ENCODE measurements at regions of chr1 and their contacts with region 1.

Region 1: DNA sequence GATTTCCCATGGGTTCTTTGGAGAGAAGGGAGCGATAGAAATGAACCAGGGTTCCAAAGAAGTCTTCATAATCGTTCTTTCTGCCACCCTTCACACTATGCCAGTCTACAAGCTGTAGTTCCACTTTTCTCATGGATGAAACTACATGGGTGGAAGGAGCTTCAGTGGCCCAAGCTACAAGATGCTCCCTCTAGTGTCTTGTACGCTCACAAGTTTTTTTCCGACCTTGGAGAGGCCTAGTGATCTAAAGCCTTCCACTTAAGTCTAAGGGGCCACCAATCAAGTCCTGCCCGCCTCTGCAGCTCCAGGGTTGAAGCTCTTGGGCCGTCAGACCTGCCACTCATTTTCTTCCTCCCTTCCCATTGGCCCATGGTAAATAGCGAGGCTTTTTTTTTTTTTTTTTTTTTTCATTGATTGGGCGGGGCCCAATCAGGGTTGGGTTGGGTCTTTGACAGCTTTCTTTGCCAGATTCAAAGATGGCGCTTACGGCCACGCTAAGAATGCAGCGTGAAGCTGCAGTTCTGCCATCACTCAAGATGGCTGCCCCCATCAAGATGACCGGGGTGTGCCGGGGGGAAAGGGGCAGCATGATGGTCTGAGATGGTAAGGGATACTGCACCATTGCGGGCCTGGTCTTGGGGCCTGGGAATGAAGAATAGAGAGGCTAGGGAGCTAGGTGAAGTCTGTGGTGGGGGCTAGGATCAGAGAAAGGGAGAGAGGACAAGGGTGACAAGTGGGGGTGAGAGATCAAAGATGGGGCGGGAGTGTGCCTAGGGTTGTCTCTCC is at the start of gene TOMM40L:
- H3K4me3 ChIP-seq: peak within 1 kb of the TSS; percentile 84
- H3K27ac ChIP-seq: peak within 1 kb of the TSS; percentile 26; the same call in 1 of the 2 replicates
- H3K4me1 ChIP-seq: peaks cover 4% of the 10 kb centered on the region; the same call in 1 of the 2 replicates
- CTCF ChIP-seq: peak; percentile 74

Region 2: GRCh38 chr1:161082991-161083742 is 142.6 kb before region 1 on chr1:
- CTCF ChIA-PET with region 1: no interaction called
- POLR2A ChIA-PET with region 1: no interaction called
- H3K4me3 ChIP-seq: no peak overlapping the region
- H3K27ac ChIP-seq: peak overlapping the region; percentile 18; the same call in 1 of the 2 replicates
- H3K4me1 ChIP-seq: no peaks in the 10 kb centered on the region; the same call in 1 of the 2 replicates
- CTCF ChIP-seq: no peak

Region 3: DNA sequence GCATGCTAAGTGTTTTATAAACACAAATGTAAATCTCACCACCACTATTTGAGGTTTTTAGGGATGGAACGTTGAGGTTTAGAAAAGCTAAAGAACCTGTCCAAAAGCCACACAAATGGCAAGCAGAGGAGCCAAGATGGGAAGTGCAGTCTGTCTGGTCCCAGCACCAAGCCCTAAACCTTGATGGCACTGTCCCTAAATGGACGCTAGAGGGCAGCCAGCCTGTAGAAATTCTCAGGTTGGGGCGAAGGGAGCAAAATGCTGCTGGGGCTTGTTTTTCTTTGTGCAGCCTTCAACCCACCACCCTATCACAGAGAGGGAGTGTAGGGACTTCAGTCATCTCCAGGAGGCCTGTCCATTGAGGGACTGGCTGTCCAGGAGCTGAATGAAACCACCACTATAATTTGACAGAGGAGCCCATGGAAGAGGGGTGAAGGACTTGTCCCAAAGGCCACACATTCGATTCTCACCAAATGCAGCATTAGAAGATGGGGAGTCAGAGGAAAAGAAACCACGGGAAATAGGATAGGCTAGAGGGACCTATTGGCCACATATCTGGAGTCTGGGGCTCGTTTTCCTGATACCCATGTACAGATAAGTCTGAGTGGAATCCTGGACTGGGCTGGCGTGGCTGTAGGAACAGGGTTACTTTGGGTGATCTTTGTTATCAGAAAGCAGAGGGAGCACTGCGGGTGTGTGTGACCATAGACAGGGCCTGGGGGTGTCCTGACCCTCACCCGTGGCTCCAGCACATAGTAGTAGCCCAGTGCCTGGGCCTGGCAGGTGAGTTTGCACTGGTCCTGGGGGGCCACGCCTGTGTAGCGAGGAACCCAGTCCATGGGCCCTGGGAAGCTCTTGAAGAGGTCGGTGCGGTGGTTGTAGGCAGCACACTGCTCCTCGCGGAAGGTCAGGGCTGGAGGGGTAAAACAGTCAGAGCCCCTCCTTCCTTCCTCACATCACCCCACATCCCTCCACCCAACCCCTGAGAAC is 33.0 kb before region 1 on chr1:
- CTCF ChIA-PET with region 1: interaction called, 45 read pairs
- POLR2A ChIA-PET with region 1: interaction called, 7 read pairs
- H3K4me3 ChIP-seq: no peak overlapping the region
- H3K27ac ChIP-seq: no peak overlapping the region
- H3K4me1 ChIP-seq: no peaks in the 10 kb centered on the region
- CTCF ChIP-seq: peak; percentile 71

Region 4: GRCh38 chr1:161209790-161210409 is 15.8 kb before region 1 on chr1:
- CTCF ChIA-PET with region 1: interaction called, 82 read pairs
- POLR2A ChIA-PET with region 1: interaction called, 7 read pairs
- H3K4me3 ChIP-seq: no peak overlapping the region
- H3K27ac ChIP-seq: no peak overlapping the region
- H3K4me1 ChIP-seq: no peaks in the 10 kb centered on the region
- CTCF ChIP-seq: peak; percentile 83

Region 5: GRCh38 chr1:161250829-161251228 is 25.1 kb after region 1 on chr1:
- CTCF ChIA-PET with region 1: interaction called, 17 read pairs
- POLR2A ChIA-PET with region 1: no interaction called
- H3K4me3 ChIP-seq: no peak overlapping the region
- H3K27ac ChIP-seq: no peak overlapping the region
- H3K4me1 ChIP-seq: no peaks in the 10 kb centered on the region
- CTCF ChIP-seq: no peak

Region 6: DNA sequence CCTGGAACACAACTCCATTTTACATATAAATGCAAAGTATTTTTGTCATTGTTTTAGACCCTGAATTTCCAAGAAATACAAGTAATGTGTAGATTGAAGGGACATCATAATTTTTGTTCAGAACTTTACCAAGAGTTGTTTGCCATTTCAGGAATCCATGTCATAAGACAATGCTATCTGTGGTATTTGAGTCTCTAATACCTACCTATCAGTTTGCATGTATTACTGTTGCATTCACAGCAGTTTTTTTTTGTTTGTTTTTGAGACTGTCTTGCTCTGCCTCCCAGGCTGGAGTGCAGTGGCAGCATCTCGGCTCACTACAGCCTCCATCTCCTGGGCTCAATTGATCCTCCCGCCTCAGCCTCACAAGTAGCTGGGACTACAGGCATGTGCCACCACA is 66.9 kb after region 1 on chr1:
- CTCF ChIA-PET with region 1: interaction called, 70 read pairs
- POLR2A ChIA-PET with region 1: interaction called, 3 read pairs
- H3K4me3 ChIP-seq: no peak overlapping the region
- H3K27ac ChIP-seq: no peak overlapping the region
- H3K4me1 ChIP-seq: no peaks in the 10 kb centered on the region
- CTCF ChIP-seq: no peak

Region 7: DNA sequence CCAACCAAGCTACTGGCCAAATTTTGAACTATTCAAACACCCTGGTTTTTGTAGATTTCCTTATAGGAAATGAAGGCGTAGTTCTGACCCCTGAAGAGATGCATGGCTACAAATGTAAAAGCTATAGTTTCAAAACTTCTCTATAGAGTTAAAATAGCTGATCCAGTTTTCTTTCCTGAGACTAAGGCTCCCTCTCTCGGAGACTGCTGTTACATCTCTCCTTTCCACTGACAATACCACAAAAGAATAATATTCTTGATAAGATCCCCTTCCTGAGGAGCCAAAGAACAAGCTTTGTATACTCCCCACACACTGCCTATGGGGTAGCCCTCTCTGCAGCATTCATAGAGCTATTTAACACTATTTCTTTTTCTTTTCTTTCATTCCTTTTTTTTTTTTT is 148.6 kb after region 1 on chr1:
- CTCF ChIA-PET with region 1: interaction called, 146 read pairs
- POLR2A ChIA-PET with region 1: interaction called, 4 read pairs
- H3K4me3 ChIP-seq: no peak overlapping the region
- H3K27ac ChIP-seq: no peak overlapping the region
- H3K4me1 ChIP-seq: no peaks in the 10 kb centered on the region
- CTCF ChIP-seq: peak; percentile 31; the same call in 1 of the 2 replicates

Region 8: DNA sequence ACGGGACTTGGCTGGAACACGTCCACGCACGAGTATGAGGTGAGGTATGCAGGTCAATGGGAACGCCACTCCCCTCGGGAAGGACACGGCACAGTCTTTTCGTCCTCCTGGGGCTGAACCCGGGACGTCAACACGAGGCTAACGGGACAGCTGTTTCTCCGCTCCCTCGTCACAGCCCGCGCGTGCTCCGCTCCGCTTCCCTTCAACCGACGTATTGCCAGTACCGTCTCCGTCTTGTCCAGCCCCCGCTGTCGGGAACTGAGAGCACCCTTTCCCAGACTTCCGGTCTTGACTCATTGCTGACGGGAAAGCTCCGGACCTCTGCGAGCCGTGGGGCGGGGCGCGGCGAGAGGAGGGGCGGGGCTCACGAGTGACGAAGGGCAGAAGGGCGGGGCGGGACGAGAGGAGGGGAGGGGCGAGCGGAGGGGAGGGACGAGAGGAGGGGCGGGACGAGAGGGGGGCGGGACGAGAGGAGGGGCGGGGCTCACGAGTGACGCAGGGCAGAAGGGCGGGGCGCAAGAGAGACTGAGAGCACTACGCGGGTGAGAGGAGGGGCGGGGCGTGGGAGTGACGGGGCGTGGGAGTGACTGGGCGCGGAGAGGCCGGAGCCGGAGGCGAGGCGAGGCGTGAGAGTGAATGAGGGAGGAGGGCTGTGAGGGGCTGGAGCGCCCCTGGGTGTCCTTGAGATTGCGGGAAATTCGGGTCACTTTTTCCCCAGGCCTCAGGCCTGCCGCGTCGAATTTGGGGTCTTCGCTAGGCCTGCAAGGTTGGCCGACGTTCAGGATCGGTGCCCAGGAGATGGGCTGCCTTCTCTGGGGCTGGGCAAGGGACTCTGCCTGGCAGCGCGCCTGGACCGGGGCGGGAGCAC is 164.2 kb after region 1 on chr1:
- CTCF ChIA-PET with region 1: interaction called, 146 read pairs
- POLR2A ChIA-PET with region 1: interaction called, 22 read pairs
- H3K4me3 ChIP-seq: peak overlapping the region; percentile 65
- H3K27ac ChIP-seq: peak overlapping the region; percentile 56; the same call in 1 of the 2 replicates
- H3K4me1 ChIP-seq: no peaks in the 10 kb centered on the region; the same call in 1 of the 2 replicates
- CTCF ChIP-seq: no peak

Region 9: DNA sequence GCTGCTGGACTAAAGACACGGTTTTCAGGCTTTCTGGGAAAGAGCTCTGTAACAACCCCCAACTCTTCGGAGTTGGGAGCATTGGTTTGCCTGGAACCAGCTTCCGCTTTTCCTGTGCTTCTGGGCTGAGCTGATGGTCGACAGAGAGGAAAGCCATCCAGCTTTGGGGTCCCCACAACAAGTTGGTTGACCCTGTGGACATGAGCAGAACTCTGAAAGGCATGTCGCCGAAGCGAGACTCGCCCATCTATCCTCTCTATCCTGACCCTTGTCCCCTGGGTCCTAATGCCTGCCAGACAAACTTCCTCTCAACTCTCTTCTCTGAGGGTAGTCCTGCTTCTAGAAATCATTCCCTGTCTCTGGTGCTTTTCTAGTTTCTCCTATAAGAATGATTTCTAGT is 247.6 kb after region 1 on chr1:
- CTCF ChIA-PET with region 1: no interaction called
- POLR2A ChIA-PET with region 1: no interaction called
- H3K4me3 ChIP-seq: no peak overlapping the region
- H3K27ac ChIP-seq: no peak overlapping the region
- H3K4me1 ChIP-seq: no peaks in the 10 kb centered on the region
- CTCF ChIP-seq: no peak

Measured in HEK293 (cell line).